Aorta (tissue), 5 donors: ENCODE measurements at regions of chr22 and their contacts with region 1.

Region 1: GRCh38 chr22:45645526-45646414 is 25.9 kb upstream of the ATXN10 start:
- DNase-seq: peak; percentile 73 to 92
- ATAC-seq: peak; percentile 89
- H3K4me3 ChIP-seq: no peak overlapping the region
- H3K27ac ChIP-seq: no peak overlapping the region
- H3K4me1 ChIP-seq: no peaks in the 10 kb centered on the region
- H3K27me3 ChIP-seq: no peaks in the 10 kb centered on the region

Region 2: DNA sequence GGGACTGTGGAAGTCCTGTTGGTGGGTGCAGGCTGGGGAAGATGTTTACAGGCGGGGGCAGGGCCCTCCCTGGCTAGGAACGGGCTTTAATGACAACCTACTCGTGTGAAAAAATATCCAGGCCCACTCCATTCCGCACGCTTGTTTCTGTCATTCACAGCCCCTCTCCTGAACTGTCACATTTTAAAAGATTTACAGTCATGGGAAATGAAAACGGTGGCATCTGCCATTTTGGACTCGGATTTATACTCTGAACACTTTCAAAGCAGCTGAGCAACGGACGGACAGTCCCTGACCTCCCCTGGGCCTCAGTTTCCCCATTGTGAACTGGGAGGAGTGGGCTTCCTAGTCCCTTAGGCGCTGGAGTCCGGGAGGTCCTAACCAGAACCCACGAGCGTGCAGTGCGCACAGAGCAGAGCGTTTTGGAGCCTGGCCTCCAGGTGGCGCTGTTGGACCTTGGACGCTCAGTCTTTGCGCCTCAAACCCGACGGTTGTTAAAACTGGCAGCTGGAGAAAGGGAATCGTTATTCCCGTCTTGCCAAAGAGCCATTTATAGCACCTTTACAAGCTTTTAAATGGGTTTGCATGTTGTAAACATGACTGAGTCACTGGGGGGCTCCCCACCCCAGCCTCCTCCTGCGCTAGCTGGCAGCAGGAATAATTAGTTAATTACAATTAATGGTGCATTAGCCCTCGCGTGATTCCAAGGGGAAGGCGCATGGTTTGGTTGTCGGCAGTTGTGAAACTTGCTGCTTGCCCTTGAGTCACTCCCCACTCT is 67.8 kb before region 1 on chr22:
- intact Hi-C with region 1: loop called in 1 of 2 experiments (anchors 5 kb)
- DNase-seq: peak; percentile 88 to 95
- ATAC-seq: peak; percentile 74
- H3K4me3 ChIP-seq: no peak overlapping the region
- H3K27ac ChIP-seq: no peak overlapping the region
- H3K4me1 ChIP-seq: no peaks in the 10 kb centered on the region
- H3K27me3 ChIP-seq: peaks cover 0 to 2% of the 10 kb centered on the region in 2 donors

Region 3: DNA sequence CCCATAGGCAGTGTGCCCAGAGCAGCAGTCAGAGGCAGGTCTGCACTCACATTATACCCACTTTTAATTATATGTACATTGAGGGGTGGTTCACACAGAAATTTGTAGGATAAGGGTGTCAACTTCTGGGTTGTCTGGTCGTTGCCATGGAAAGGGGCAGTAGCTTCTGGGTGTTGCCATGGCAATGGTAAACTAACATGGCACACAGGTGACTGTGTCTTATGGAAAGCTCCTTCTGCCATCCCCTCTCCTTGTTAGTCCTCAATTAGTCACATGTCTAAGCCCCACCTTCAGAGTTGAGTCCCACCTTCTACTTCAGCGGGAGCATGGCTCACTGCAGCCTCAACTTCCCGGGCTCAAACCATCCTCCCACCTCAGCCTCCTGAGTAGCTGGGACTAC is 30.4 kb before region 1 on chr22:
- intact Hi-C with region 1: no loop called
- DNase-seq: peak in 1 of 2 donors; percentile 30
- ATAC-seq: no peak
- H3K4me3 ChIP-seq: no peak overlapping the region
- H3K27ac ChIP-seq: no peak overlapping the region
- H3K4me1 ChIP-seq: no peaks in the 10 kb centered on the region
- H3K27me3 ChIP-seq: no peaks in the 10 kb centered on the region

Region 4: DNA sequence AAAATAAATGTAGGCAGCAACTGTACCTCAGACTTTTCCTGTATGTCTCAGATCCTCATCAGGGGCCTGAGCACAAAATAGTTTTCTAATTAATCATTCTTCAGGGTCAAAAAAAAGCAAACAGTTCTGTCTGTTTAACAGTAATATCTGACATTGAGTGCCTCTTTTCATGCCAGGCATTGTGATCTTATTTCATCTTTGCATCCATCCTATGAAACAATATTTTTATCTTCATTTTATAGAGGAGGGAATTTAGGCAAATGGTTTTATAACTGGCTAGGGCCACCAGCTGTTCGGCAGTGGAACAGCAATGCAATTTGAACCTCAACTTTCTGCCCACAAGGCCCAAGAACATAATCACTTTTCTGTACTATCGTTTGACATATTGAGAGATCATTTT is 185.6 kb after region 1 on chr22:
- intact Hi-C with region 1: loop called in 1 of 2 experiments (anchors 10 kb)
- DNase-seq: no peak
- ATAC-seq: no peak
- H3K4me3 ChIP-seq: no peak overlapping the region
- H3K27ac ChIP-seq: no peak overlapping the region
- H3K4me1 ChIP-seq: no peaks in the 10 kb centered on the region
- H3K27me3 ChIP-seq: no peaks in the 10 kb centered on the region

Region 5: GRCh38 chr22:45863981-45864751 is 218.4 kb after region 1 on chr22:
- intact Hi-C with region 1: loop called (anchors 2 to 5 kb)
- DNase-seq: peak; percentile 67 to 90
- ATAC-seq: peak; percentile 62
- H3K4me3 ChIP-seq: no peak overlapping the region
- H3K27ac ChIP-seq: no peak overlapping the region
- H3K4me1 ChIP-seq: no peaks in the 10 kb centered on the region
- H3K27me3 ChIP-seq: no peaks in the 10 kb centered on the region